ENCODE measurements at regions of chr6 and their contacts with region 1.

Region 1: DNA sequence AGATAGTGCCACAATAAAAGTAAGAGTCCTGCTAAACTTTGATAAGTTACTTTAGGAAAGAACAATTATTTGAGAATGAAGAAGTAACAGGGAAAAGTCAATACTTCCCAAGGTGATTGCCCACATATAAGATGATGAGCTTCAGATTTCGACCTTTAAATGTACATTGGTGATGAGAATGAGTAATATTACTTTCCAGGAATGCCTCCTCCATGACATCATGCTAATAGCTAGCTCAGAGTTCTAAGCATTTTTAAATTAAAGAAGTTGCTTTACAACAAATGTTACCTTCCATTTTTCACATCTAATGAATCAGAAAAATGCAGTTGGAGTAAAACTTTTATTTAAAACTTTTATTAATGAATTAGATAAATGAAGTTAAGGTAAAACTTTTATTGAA is 22.5 kb upstream of the OPN5 start:
- DNase-seq: peak; percentile 28
- H3K4me3 ChIP-seq: no peak overlapping the region
- H3K27ac ChIP-seq: no peak overlapping the region
- H3K4me1 ChIP-seq: no peaks in the 10 kb centered on the region
- H3K27me3 ChIP-seq: no peaks in the 10 kb centered on the region
- CTCF ChIP-seq: no peak

Region 2: DNA sequence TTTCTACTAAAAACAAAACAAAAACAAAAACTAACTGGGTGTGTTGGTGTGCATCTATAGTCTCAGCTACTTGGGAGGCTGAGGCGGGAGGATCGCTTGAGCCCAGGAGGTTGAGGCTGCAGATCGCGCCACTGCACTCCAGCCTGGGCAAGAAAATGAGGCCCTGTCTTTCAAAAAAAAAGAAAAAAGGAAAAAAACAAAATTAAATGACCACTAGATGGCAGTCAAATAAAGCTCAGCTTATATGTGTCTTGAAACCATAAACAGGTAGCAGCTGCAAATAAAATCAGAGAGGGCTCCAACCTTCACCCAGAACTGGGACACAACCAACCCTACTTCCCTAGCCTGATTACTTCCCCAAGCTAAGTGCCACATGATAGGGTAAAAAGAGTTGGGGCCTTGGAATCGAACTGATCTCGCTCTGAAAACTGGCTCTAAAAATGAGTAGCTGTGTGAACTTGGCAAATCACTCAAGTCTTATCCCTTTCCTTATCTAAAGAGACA is 128.0 kb before region 1 on chr6:
- CTCF ChIA-PET with region 1: no interaction called
- dilution Hi-C with region 1: no loop called
- in situ Hi-C with region 1: no loop called
- intact Hi-C with region 1: no loop called
- DNase-seq: peak; percentile 60
- H3K4me3 ChIP-seq: no peak overlapping the region
- H3K27ac ChIP-seq: no peak overlapping the region
- H3K4me1 ChIP-seq: peaks cover 5% of the 10 kb centered on the region
- H3K27me3 ChIP-seq: no peaks in the 10 kb centered on the region
- CTCF ChIP-seq: peak; percentile 49 to 59

Region 3: GRCh38 chr6:47669684-47670513 is 89.5 kb before region 1 on chr6:
- CTCF ChIA-PET with region 1: no interaction called
- dilution Hi-C with region 1: no loop called
- in situ Hi-C with region 1: no loop called
- intact Hi-C with region 1: no loop called
- DNase-seq: peak; percentile 94
- H3K4me3 ChIP-seq: no peak overlapping the region
- H3K27ac ChIP-seq: peak overlapping the region; percentile 83
- H3K4me1 ChIP-seq: peaks cover 33% of the 10 kb centered on the region
- H3K27me3 ChIP-seq: no peaks in the 10 kb centered on the region
- CTCF ChIP-seq: no peak

Region 4: GRCh38 chr6:47810885-47811284 is 51.5 kb after region 1 on chr6:
- CTCF ChIA-PET with region 1: interaction called, 10 read pairs
- dilution Hi-C with region 1: no loop called
- in situ Hi-C with region 1: no loop called
- intact Hi-C with region 1: no loop called
- DNase-seq: no peak
- H3K4me3 ChIP-seq: no peak overlapping the region
- H3K27ac ChIP-seq: no peak overlapping the region
- H3K4me1 ChIP-seq: no peaks in the 10 kb centered on the region
- H3K27me3 ChIP-seq: no peaks in the 10 kb centered on the region
- CTCF ChIP-seq: peak; percentile 7 to 32

Region 5: GRCh38 chr6:47967843-47968242 is 208.5 kb after region 1 on chr6:
- CTCF ChIA-PET with region 1: no interaction called
- dilution Hi-C with region 1: no loop called
- in situ Hi-C with region 1: no loop called
- intact Hi-C with region 1: no loop called
- DNase-seq: peak; percentile 29
- H3K4me3 ChIP-seq: no peak overlapping the region
- H3K27ac ChIP-seq: no peak overlapping the region
- H3K4me1 ChIP-seq: no peaks in the 10 kb centered on the region
- H3K27me3 ChIP-seq: no peaks in the 10 kb centered on the region
- CTCF ChIP-seq: no peak

Region 6: DNA sequence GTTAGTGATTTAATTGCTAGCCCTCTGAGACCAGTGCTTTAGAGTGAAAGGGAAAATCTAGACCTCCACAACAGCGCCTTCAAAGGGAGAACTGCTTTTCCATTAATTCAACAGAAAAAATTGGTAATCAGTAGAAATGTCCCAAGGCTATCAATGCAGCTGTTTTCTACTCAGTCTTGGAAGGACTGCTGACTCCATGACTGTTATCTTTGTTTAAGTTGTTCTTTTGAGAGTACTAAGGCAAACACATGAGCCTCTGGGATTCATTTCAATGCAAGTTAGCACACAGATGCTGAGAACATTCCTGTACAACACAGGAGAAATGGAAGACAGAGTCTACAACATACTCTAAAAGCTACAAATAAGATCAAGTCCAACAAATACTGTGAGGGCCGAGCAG is 653.3 kb after region 1 on chr6:
- CTCF ChIA-PET with region 1: no interaction called
- dilution Hi-C with region 1: no loop called
- in situ Hi-C with region 1: no loop called
- intact Hi-C with region 1: no loop called
- DNase-seq: no peak
- H3K4me3 ChIP-seq: no peak overlapping the region
- H3K27ac ChIP-seq: no peak overlapping the region
- H3K4me1 ChIP-seq: no peaks in the 10 kb centered on the region
- H3K27me3 ChIP-seq: no peaks in the 10 kb centered on the region
- CTCF ChIP-seq: no peak